HCT116 (cell line): ENCODE measurements at regions of chr3 and their contacts with region 1.

Region 1: GRCh38 chr3:33980252-33980651 is 181.8 kb downstream of the PDCD6IP start:
- DNase-seq: peak; percentile 8
- ATAC-seq: peak; percentile 72
- H3K4me3 ChIP-seq: no peak overlapping the region
- H3K27ac ChIP-seq: no peak overlapping the region
- H3K4me1 ChIP-seq: no peaks in the 10 kb centered on the region
- H3K27me3 ChIP-seq: peaks cover 7% of the 10 kb centered on the region
- CTCF ChIP-seq: peak; percentile 13 to 49 (median 45); a peak in 4 of 6 replicates
- POLR2A ChIP-seq: no peak
- RAD21 ChIP-seq: peak; percentile 58

Region 2: GRCh38 chr3:34405159-34405558 is 424.9 kb after region 1 on chr3:
- CTCF ChIA-PET with region 1: no interaction called
- POLR2A ChIA-PET with region 1: no interaction called
- RAD21 ChIA-PET with region 1: no interaction called
- intact Hi-C with region 1: no loop called
- DNase-seq: no peak
- ATAC-seq: no peak
- H3K4me3 ChIP-seq: no peak overlapping the region
- H3K27ac ChIP-seq: no peak overlapping the region
- H3K4me1 ChIP-seq: no peaks in the 10 kb centered on the region
- H3K27me3 ChIP-seq: no peaks in the 10 kb centered on the region
- CTCF ChIP-seq: no peak
- POLR2A ChIP-seq: no peak
- RAD21 ChIP-seq: no peak

Region 3: GRCh38 chr3:35908366-35909232 is 1928.3 kb after region 1 on chr3:
- CTCF ChIA-PET with region 1: no interaction called
- POLR2A ChIA-PET with region 1: no interaction called
- RAD21 ChIA-PET with region 1: no interaction called
- intact Hi-C with region 1: loop called (anchors 5 kb)
- DNase-seq: peak; percentile 15
- ATAC-seq: no peak
- H3K4me3 ChIP-seq: no peak overlapping the region
- H3K27ac ChIP-seq: no peak overlapping the region
- H3K4me1 ChIP-seq: no peaks in the 10 kb centered on the region
- H3K27me3 ChIP-seq: no peaks in the 10 kb centered on the region
- CTCF ChIP-seq: peak in 2 of 3 experiments; percentile 56 to 63; a peak in 4 of 6 replicates
- POLR2A ChIP-seq: no peak
- RAD21 ChIP-seq: peak; percentile 45